ENCODE measurements at regions of chr1 and their contacts with region 1.

Region 1: DNA sequence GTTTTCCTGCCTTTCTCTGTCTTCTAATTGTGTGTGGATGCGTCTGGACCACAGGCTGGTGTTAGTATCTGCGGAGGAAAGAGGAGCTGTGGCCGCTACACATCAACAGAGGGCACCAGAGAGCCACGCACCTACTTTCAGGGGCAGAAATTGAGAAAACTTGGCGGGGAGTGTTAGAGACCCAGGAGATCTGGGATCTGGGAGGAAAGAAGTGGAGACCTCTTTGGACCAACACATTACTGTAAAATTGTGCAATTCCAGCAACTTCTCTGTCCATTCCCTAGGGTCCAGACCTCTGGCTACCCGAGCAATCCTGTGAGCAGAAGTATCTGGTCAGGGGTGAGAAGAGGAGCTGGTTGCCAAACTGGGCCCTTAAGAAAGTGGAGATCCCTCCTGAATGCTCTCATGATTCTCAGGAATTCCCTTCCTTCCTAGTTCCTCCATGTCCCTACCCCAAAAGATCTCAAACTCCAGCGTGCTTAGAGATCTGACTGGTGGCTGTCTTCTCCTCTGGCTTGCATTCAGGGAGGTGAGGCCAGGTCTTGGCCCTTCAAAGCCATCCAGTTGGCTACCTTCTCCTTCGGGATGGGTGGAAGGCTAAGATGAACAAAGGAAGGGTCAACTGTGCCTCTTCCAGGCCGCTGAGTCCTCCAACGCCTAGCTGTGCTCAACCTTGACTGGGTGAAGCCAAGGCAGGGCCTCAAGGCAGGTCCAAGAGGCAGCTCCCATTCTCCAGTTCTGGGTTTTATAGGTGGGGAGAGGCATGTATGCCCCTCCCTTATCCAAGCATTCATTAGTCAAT is 1.2 kb upstream of the KIRREL1 start:
- H3K4me3 ChIP-seq: no peak overlapping the region
- H3K27ac ChIP-seq: no peak overlapping the region
- H3K4me1 ChIP-seq: peaks cover 3% of the 10 kb centered on the region; the same call in 1 of the 2 replicates
- CTCF ChIP-seq: peak; percentile 82

Region 2: DNA sequence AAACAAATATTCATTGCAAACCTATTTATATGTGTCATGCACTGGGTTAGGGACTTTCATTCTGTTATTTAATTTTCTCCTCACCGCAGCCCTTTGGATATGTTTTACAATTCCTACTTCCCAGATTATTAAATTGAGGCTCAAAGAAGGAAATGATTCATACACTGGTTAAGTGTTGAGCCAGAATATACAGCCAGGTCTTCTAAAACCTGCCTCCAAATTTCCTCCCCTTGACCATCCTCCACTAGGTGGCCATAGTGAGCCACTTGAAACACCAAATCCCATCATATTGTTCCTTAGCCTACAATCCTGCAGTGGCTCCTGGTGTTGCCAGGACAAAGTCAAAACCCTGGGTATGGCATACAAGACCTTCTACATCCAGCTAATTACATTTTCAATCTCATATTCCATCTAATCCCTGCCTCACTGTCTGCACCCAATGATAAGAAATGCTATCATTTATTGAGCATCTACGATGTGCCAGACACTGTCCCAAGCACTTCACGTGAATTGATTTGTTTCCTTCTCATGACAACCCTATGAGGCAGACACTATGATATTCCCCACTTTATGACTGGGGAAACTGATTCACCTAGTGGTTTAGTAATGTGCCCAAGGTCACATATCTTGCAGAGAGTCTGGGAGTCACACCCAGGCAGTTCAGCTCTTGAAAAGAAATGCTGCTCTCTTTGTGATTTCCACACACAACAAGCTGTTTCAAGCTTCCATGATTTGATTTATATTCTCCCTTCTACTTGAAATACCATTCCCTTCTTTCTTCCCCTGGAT is 22.3 kb before region 1 on chr1:
- CTCF ChIA-PET with region 1: interaction called, 71 read pairs
- POLR2A ChIA-PET with region 1: interaction called, 4 read pairs
- H3K4me3 ChIP-seq: no peak overlapping the region
- H3K27ac ChIP-seq: no peak overlapping the region
- H3K4me1 ChIP-seq: no peaks in the 10 kb centered on the region
- CTCF ChIP-seq: peak; percentile 61

Region 3: GRCh38 chr1:158019171-158019868 is 27.1 kb after region 1 on chr1:
- CTCF ChIA-PET with region 1: interaction called, 14 read pairs
- POLR2A ChIA-PET with region 1: interaction called, 12 read pairs
- H3K4me3 ChIP-seq: no peak overlapping the region
- H3K27ac ChIP-seq: no peak overlapping the region
- H3K4me1 ChIP-seq: peaks cover 11% of the 10 kb centered on the region
- CTCF ChIP-seq: no peak

Region 4: DNA sequence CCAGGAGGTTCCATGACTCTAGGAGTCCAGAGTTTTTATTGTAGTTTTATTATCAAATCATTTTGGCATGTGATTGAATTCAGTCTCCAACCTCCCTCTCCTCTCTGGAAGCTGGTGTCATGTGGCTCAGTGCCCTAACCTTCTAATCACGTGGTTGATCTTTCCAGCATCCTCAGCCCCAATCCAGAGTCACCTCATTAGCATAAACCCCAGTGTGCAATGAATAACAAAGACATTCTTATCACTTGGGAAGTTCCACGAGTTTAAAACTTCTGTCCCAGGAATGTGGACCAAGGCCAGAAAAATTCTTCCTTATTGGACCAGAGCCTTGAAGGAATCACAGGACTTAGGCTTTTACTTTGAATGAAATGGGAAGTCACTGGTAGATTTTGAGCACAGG is 53.4 kb after region 1 on chr1:
- CTCF ChIA-PET with region 1: interaction called, 121 read pairs
- POLR2A ChIA-PET with region 1: interaction called, 7 read pairs
- H3K4me3 ChIP-seq: no peak overlapping the region
- H3K27ac ChIP-seq: no peak overlapping the region
- H3K4me1 ChIP-seq: no peaks in the 10 kb centered on the region
- CTCF ChIP-seq: no peak

Region 5: DNA sequence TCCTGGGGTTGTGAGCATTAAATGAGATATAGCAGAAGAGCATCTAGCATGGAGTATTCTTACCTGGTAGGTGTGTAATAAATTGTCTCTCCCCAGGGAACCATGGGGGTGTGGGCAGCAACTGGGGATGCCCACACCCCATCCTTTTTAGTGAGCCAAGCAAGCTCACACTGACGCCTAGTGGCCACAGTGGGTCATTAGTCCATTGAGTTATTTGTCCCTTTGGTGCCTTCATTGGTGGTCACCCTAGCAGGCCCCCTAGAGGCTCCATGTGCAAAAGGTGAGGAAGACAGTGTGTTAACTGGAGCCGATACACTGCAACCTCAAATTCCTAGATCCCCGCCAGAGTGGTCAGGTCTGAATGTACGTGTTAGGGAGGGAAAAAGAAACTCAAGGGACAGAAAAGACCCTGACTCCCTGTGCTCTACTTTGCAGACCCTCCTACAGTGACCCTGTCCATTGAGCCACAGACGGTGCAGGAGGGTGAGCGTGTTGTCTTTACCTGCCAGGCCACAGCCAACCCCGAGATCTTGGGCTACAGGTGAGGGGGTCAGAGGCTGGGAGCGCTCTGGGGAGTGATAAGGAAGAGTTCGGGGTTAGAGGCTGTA is 95.2 kb after region 1 on chr1:
- CTCF ChIA-PET with region 1: interaction called, 132 read pairs
- POLR2A ChIA-PET with region 1: interaction called, 6 read pairs
- H3K4me3 ChIP-seq: no peak overlapping the region
- H3K27ac ChIP-seq: no peak overlapping the region
- H3K4me1 ChIP-seq: no peaks in the 10 kb centered on the region
- CTCF ChIP-seq: peak; percentile 84

Measured in HEK293 (cell line).